ENCODE measurements at regions of chr19 and their contacts with region 1.

Region 1: DNA sequence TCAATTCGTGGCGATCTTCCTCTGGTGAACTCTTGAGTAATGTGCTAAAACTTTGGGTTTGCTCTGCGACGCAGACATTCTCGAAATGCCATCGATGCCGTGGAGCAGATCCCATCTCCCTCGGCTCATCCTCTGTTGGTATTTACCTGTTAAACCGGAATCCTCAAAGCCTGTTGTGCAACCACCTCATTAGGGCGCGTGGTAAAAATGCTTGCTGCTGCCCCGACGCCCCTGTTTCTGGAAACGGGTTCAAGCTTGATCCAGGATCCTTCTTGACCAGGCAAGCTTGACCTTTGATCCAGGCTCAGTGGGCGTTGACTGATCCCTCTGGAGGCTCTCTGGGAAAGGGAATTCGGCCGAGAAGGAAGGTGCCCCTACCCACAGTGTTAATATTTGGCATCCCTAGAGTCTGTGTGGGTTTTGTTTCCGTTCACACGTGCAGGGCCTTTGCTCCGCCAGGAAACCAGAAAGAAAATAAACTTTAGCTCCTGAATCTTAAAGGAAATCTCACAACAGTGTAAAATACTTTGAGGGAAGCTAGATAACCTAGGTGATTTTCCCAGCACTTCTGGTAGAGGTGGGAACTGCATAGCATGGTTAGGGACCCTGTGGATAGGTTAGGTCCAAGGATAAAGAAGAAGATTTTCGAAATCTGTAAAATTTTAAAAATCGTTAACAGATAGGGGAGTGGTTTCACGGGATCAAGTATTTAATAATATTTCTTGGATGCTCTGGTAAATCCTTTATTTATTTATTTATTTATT is 1.1 kb downstream of the LSM14A start:
- DNase-seq: peak in 3 of 35 experiments; percentile 4 to 46 (median 5)
- ATAC-seq: no peak
- H3K4me3 ChIP-seq: peak overlapping the region; percentile 74 to 90
- H3K4me3 Mint-ChIP-seq: peak overlapping the region; percentile 96 to 98 (median 97)
- H3K27ac ChIP-seq: peak overlapping the region; percentile 88
- H3K27ac Mint-ChIP-seq: peak overlapping the region; percentile 97 to 99
- H3K4me1 ChIP-seq: peaks cover 42 to 43% of the 10 kb centered on the region in 2 experiments
- H3K4me1 Mint-ChIP-seq: peaks cover 56 to 62% (median 61%) of the 10 kb centered on the region in 3 donors
- H3K27me3 ChIP-seq: no peaks in the 10 kb centered on the region
- H3K27me3 Mint-ChIP-seq: no peaks in the 10 kb centered on the region

Region 2: DNA sequence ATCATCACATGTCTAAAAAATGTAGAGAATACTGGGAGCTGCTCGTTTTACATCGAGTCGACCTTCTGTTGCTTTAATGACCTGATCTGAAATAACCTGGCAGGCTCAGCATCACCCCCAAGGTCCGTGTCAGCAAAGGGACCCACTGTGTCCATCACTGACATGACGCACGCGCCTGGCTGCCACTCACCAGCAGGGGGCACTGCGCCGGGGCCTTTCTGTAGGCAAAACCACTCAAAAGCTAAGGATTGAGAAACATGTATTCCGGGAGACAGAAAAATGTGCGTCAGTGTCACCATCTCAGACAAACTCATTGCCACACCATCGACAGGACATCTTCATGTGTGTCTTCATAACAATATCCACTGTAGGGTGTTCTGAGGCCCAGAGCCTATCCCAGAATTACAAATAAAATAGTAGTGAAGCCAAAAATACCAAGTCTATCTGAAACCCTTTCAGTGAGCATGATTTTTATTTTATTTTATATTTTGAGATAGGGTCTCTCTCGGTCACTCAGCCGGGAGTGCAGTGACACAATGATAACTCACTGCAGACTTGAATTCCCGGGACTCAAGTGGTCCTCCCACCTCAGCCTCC is 131.4 kb before region 1 on chr19:
- CTCF ChIA-PET with region 1: no interaction called
- POLR2A ChIA-PET with region 1: interaction called in 1 of 2 experiments, 10 read pairs
- DNase-seq: peak; percentile 19 to 72 (median 56)
- ATAC-seq: peak in 1 of 4 experiments; percentile 47
- H3K4me3 ChIP-seq: no peak overlapping the region
- H3K4me3 Mint-ChIP-seq: no peak overlapping the region
- H3K27ac ChIP-seq: no peak overlapping the region
- H3K27ac Mint-ChIP-seq: no peak overlapping the region
- H3K4me1 ChIP-seq: no peaks in the 10 kb centered on the region
- H3K4me1 Mint-ChIP-seq: peaks cover 0 to 6% (median 0%) of the 10 kb centered on the region in 3 donors
- H3K27me3 ChIP-seq: peaks cover 0 to 15% of the 10 kb centered on the region in 2 experiments
- H3K27me3 Mint-ChIP-seq: peaks cover 12 to 25% of the 10 kb centered on the region in 2 donors

Region 3: DNA sequence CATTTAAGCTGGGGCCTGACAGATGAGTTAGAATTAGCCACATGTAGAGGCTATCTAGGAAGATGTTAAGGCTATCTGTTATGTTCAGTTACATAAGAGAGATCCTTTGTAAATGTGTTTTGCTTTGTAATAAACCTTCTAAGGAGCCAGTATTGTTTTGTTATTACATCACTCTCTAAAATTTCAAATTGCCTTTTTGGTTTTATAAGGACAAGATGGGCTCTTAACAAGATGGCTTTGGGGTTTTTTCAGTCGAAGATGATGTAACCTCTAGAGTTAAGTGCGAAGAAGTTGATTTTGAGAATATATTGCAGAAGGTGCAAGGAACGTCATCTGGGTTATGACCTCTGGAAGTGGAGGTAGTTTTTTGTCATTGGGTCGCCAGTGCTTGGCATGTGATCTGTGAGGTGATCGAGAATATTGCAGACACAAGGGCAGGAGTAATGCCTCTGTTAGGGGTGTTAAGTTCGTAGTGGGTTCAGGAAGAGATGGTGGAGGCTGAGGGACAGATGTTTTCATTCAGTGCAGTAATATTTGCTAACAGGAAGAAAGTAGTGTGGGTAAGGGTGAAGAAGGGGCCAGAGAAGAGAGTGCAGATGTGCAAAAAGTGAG is 11.6 kb after region 1 on chr19:
- CTCF ChIA-PET with region 1: interaction called, 3 to 10 read pairs
- POLR2A ChIA-PET with region 1: interaction called in 1 of 2 experiments, 3 read pairs
- DNase-seq: peak in 19 of 35 experiments; percentile 3 to 51 (median 20)
- ATAC-seq: peak in 1 of 4 experiments; percentile 51
- H3K4me3 ChIP-seq: no peak overlapping the region
- H3K4me3 Mint-ChIP-seq: peak overlapping the region; percentile 32 to 66 (median 47)
- H3K27ac ChIP-seq: peak overlapping the region; percentile 7
- H3K27ac Mint-ChIP-seq: peak overlapping the region; percentile 9 to 36
- H3K4me1 ChIP-seq: peaks cover 40 to 49% of the 10 kb centered on the region in 2 experiments
- H3K4me1 Mint-ChIP-seq: peaks cover 88 to 93% (median 89%) of the 10 kb centered on the region in 3 donors
- H3K27me3 ChIP-seq: no peaks in the 10 kb centered on the region
- H3K27me3 Mint-ChIP-seq: no peaks in the 10 kb centered on the region

Region 4: GRCh38 chr19:34217952-34218817 is 44.8 kb after region 1 on chr19:
- CTCF ChIA-PET with region 1: interaction called in 1 of 2 experiments, 5 read pairs
- POLR2A ChIA-PET with region 1: interaction called in 1 of 2 experiments, 11 read pairs
- DNase-seq: peak; percentile 30 to 91 (median 75)
- ATAC-seq: peak; percentile 90 to 96 (median 94)
- H3K4me3 ChIP-seq: peak overlapping the region in 1 of 2 donors; percentile 25
- H3K4me3 Mint-ChIP-seq: peak overlapping the region; percentile 42 to 65 (median 64)
- H3K27ac ChIP-seq: peak overlapping the region; percentile 36
- H3K27ac Mint-ChIP-seq: peak overlapping the region; percentile 74 to 87
- H3K4me1 ChIP-seq: peaks cover 20 to 22% of the 10 kb centered on the region in 2 experiments
- H3K4me1 Mint-ChIP-seq: peaks cover 49 to 56% (median 52%) of the 10 kb centered on the region in 3 donors
- H3K27me3 ChIP-seq: no peaks in the 10 kb centered on the region
- H3K27me3 Mint-ChIP-seq: no peaks in the 10 kb centered on the region

Region 5: GRCh38 chr19:35013031-35013819 is 839.9 kb after region 1 on chr19:
- CTCF ChIA-PET with region 1: no interaction called
- POLR2A ChIA-PET with region 1: interaction called in 1 of 2 experiments, 10 read pairs
- DNase-seq: peak; percentile 60 to 91 (median 80)
- ATAC-seq: peak; percentile 56 to 73 (median 64)
- H3K4me3 ChIP-seq: peak overlapping the region in 1 of 2 donors; percentile 41
- H3K4me3 Mint-ChIP-seq: peak overlapping the region; percentile 67 to 85 (median 76)
- H3K27ac ChIP-seq: peak overlapping the region; percentile 82
- H3K27ac Mint-ChIP-seq: peak overlapping the region; percentile 94 to 100
- H3K4me1 ChIP-seq: peaks cover 25 to 83% of the 10 kb centered on the region in 2 experiments
- H3K4me1 Mint-ChIP-seq: peaks cover 66 to 76% (median 74%) of the 10 kb centered on the region in 3 donors
- H3K27me3 ChIP-seq: no peaks in the 10 kb centered on the region
- H3K27me3 Mint-ChIP-seq: no peaks in the 10 kb centered on the region